ENCODE measurements at regions of chr5 and their contacts with region 1.

Region 1: DNA sequence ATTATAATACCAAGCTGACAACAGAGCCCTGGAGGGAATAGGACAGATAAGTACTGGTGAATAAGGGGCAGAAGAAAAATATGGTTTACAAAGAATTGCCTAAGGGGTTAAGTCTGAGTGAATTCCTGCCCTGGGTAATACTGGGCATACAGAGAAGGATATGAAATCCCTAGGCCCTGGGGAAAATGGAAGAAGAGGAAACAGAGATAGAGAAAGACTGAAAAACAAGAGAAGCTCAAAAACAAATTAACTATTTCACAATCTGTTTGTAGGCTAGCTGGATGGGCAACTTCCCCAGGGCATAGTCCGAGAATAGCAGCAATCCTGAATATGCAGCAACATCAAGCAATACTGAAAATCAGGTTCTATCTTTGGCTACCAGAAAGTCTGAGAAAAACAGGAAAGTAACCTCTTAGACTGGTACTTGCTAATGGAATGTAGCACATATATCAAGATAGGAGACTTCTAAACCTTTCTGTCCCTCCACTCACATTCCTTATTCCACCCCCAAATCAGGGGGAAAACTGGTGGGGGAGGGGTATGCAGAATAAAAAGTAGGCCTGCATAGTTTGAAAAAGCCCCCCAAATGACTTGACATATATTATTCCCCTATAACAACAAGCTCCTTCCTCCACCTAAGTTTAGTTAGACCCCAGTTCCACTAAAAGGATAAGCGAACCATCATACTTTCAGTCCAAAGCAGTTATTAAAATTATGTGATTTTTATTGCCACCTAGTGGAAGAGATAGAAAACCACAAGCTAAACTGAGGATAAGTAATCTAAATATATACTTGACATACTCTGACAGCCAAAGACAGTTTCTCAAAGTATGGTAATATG is 20.6 kb downstream of the SLC38A9 start:
- DNase-seq: no peak
- H3K4me3 ChIP-seq: no peak overlapping the region
- H3K27ac ChIP-seq: no peak overlapping the region
- H3K4me1 ChIP-seq: no peaks in the 10 kb centered on the region
- H3K27me3 ChIP-seq: no peaks in the 10 kb centered on the region
- CTCF ChIP-seq: peak; percentile 36 to 72 (median 59)
- EP300 ChIP-seq: no peak
- POLR2A ChIP-seq: no peak

Region 2: GRCh38 chr5:55344392-55344992 is 347.0 kb before region 1 on chr5:
- intact Hi-C with region 1: loop called (anchors 5 to 10 kb)
- DNase-seq: peak in 4 of 5 donors; percentile 44 to 69 (median 54)
- H3K4me3 ChIP-seq: no peak overlapping the region
- H3K27ac ChIP-seq: no peak overlapping the region
- H3K4me1 ChIP-seq: no peaks in the 10 kb centered on the region
- H3K27me3 ChIP-seq: no peaks in the 10 kb centered on the region
- CTCF ChIP-seq: peak; percentile 38 to 81 (median 78)
- EP300 ChIP-seq: no peak
- POLR2A ChIP-seq: no peak

Region 3: GRCh38 chr5:55410845-55411244 is 280.6 kb before region 1 on chr5:
- intact Hi-C with region 1: loop called in 1 of 4 experiments (anchors 5 kb)
- DNase-seq: no peak
- H3K4me3 ChIP-seq: no peak overlapping the region
- H3K27ac ChIP-seq: no peak overlapping the region
- H3K4me1 ChIP-seq: no peaks in the 10 kb centered on the region
- H3K27me3 ChIP-seq: no peaks in the 10 kb centered on the region
- CTCF ChIP-seq: no peak
- EP300 ChIP-seq: no peak
- POLR2A ChIP-seq: no peak

Region 4: DNA sequence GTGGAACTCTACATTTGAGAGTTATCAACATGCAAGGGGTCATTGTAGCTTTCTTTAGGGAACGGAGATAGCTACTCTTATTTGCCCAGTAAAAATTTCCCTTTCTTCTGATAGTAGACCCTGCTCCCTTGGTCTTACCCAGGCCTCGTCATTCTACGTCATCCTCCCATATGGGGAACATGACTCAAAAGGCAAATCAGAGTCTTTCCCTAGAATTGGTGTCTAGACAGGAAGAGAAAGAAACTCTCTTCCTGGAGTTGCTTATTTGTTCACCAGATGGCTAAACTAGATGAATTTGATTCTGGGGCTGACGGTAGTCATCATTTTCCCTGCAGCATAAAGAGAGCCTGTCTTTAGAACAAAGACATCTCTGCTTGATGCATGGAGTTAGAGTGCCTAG is 32.8 kb after region 1 on chr5:
- intact Hi-C with region 1: no loop called
- DNase-seq: no peak
- H3K4me3 ChIP-seq: no peak overlapping the region
- H3K27ac ChIP-seq: no peak overlapping the region
- H3K4me1 ChIP-seq: no peaks in the 10 kb centered on the region
- H3K27me3 ChIP-seq: no peaks in the 10 kb centered on the region
- CTCF ChIP-seq: no peak
- EP300 ChIP-seq: no peak
- POLR2A ChIP-seq: no peak